HepG2 (cell line): ENCODE measurements at regions of chr2 and their contacts with region 1.

Region 1: GRCh38 chr2:37832590-37833197 is 92.4 kb upstream of the RMDN2 start:
- DNase-seq: peak; percentile 73
- ATAC-seq: peak; percentile 99
- H3K4me3 ChIP-seq: no peak overlapping the region
- H3K27ac ChIP-seq: no peak overlapping the region
- H3K4me1 ChIP-seq: peaks cover 7% of the 10 kb centered on the region
- H3K27me3 ChIP-seq: peaks cover 0 to 13% of the 10 kb centered on the region in 2 experiments; a peak in 2 of 5 replicates
- CTCF ChIP-seq: peak; percentile 93
- EP300 ChIP-seq: no peak
- POLR2A ChIP-seq: no peak
- RAD21 ChIP-seq: peak; percentile 78

Region 2: DNA sequence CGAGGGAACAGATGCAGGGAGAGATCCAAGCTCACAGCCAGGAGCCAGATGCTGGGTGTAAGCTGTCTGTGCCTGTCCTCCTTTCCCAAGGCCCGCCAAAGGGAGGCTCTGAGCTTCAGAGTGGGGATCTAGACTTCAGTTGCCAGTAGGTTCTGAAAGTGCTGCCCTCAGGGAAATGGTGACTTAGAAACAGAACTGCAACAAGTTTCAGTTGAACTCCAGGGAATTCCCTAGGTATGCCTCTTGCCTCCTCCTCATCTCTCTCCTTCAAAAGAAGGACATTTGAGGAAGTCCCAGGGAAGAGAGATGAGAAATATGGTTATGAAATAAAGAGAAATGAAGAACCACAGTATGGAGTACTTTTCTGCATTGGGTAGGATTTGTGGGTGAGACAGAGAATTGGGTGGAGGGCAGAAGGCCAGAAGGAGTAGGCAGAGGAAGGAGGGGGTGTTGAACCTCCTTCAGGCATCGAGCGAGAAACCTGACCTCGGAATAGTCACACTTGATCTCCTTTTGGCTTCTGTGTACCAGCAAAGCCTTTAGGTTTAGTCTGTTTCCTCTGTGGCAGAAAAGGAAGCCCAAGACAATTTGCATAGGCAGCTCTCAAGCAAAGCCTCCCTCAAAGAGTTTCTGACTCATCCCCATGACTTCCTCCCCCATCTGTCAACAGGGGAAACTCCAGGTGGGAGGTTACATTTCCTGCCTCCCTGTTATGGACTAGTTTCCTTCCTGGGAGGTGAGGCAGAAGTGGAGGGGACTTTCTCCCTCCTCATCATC is 442.5 kb before region 1 on chr2:
- CTCF ChIA-PET with region 1: interaction called, 35 read pairs
- POLR2A ChIA-PET with region 1: no interaction called
- in situ Hi-C with region 1: loop called (anchors 5 kb)
- intact Hi-C with region 1: no loop called
- DNase-seq: peak; percentile 56
- ATAC-seq: peak; percentile 80
- H3K4me3 ChIP-seq: no peak overlapping the region
- H3K27ac ChIP-seq: no peak overlapping the region
- H3K4me1 ChIP-seq: peaks cover 12% of the 10 kb centered on the region; the same call in 1 of the 2 replicates
- H3K27me3 ChIP-seq: peaks cover 0 to 2% of the 10 kb centered on the region in 2 experiments; a peak in 2 of 5 replicates
- CTCF ChIP-seq: no peak
- EP300 ChIP-seq: peak in 1 of 2 experiments; percentile 14; a peak in 1 of 4 replicates
- POLR2A ChIP-seq: no peak
- RAD21 ChIP-seq: no peak

Region 3: GRCh38 chr2:37414470-37414949 is 418.2 kb before region 1 on chr2:
- CTCF ChIA-PET with region 1: interaction called, 23 read pairs
- POLR2A ChIA-PET with region 1: no interaction called
- in situ Hi-C with region 1: no loop called
- intact Hi-C with region 1: loop called (anchors 1 kb)
- DNase-seq: peak; percentile 39
- ATAC-seq: peak; percentile 87
- H3K4me3 ChIP-seq: no peak overlapping the region
- H3K27ac ChIP-seq: no peak overlapping the region
- H3K4me1 ChIP-seq: no peaks in the 10 kb centered on the region
- H3K27me3 ChIP-seq: peaks cover 0 to 10% of the 10 kb centered on the region in 2 experiments; a peak in 3 of 5 replicates
- CTCF ChIP-seq: peak; percentile 72
- EP300 ChIP-seq: no peak
- POLR2A ChIP-seq: no peak
- RAD21 ChIP-seq: peak; percentile 72

Region 4: DNA sequence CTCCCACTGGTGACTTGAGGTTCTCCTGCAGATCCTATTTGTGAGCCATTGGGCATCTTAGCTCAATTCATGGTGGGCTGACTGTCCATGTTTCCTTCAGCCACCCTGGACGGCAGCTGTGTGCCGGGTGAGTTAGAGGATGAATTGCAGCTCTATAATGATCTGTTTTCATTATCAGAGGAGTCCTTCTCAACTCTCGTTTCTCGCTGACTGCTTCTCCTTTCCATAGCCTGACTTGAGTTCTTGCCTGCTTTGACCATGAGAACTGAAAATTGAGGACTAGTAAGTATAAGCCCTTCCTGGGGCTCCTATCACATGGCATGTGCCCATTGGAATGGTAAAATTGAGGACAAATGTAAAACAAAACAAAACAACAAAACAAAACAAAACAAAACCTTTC is 283.1 kb before region 1 on chr2:
- CTCF ChIA-PET with region 1: no interaction called
- POLR2A ChIA-PET with region 1: no interaction called
- in situ Hi-C with region 1: no loop called
- intact Hi-C with region 1: loop called (anchors 1 kb)
- DNase-seq: no peak
- ATAC-seq: no peak
- H3K4me3 ChIP-seq: no peak overlapping the region
- H3K27ac ChIP-seq: no peak overlapping the region
- H3K4me1 ChIP-seq: no peaks in the 10 kb centered on the region
- H3K27me3 ChIP-seq: peaks cover 0 to 9% of the 10 kb centered on the region in 2 experiments; a peak in 2 of 5 replicates
- CTCF ChIP-seq: no peak
- EP300 ChIP-seq: no peak
- POLR2A ChIP-seq: no peak
- RAD21 ChIP-seq: no peak

Region 5: DNA sequence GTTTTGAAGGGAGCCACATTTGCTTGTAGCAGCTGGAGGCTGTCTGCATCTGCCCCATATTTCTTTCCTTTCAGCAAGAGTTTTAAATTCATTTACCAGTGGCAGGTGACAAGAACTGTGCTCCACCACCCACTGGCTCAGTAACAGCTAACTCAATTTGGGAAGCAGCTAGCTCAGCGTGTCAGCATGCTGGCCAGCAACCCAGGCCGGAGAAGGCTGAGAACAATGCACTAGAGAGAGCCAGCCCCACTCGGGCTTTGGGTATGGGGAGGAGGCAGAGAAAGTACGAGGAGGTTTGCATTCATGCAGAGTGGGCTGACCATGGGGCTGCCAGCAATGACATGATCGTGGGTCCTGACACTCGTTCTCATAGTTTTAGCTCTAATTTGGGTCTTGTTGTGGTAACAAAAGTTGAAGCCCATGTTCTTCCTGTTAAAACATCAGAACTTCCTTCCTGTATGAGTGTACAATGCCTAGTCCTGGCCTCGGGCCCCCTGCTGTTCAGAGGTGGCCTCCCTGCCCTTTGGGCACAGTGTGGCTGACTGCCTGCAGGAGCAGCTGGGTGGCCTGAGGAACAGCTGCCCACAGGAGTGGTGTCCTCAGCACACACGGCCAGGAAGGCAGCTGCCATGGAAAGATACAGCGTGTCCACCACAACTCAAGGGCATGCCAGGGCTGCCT is 184.2 kb before region 1 on chr2:
- CTCF ChIA-PET with region 1: no interaction called
- POLR2A ChIA-PET with region 1: interaction called, 4 read pairs
- in situ Hi-C with region 1: no loop called
- intact Hi-C with region 1: loop called (anchors 1 kb)
- DNase-seq: no peak
- ATAC-seq: peak; percentile 71
- H3K4me3 ChIP-seq: no peak overlapping the region
- H3K27ac ChIP-seq: no peak overlapping the region
- H3K4me1 ChIP-seq: no peaks in the 10 kb centered on the region
- H3K27me3 ChIP-seq: peaks cover 2 to 29% of the 10 kb centered on the region in 2 experiments; a peak in 3 of 5 replicates
- CTCF ChIP-seq: 0 out of 2 replicates have a peak, but pooled peaks have one; percentile 8
- EP300 ChIP-seq: no peak
- POLR2A ChIP-seq: no peak
- RAD21 ChIP-seq: no peak

Region 6: DNA sequence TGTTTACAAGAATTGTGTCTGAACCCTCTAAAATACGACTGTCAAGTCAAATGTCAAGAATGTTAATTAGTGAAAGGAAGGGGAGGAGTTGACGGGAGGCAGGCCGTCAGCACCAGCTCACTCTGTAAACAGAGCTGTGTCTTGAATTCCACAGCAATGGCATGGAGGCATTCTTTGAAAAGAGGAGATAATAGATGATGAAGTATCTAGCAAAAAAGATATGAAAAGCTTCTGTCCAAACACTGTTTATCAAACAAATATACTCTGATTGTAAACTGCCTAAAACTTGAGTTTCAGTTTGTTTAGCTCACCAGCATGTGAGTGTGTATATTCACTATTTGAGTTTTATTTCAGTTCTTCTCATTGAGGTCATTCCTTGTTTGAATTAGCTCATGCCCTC is 66.6 kb before region 1 on chr2:
- CTCF ChIA-PET with region 1: no interaction called
- POLR2A ChIA-PET with region 1: no interaction called
- in situ Hi-C with region 1: no loop called
- intact Hi-C with region 1: no loop called
- DNase-seq: no peak
- ATAC-seq: no peak
- H3K4me3 ChIP-seq: no peak overlapping the region
- H3K27ac ChIP-seq: no peak overlapping the region
- H3K4me1 ChIP-seq: no peaks in the 10 kb centered on the region
- H3K27me3 ChIP-seq: no peaks in the 10 kb centered on the region; a peak in 1 of 5 replicates
- CTCF ChIP-seq: no peak
- EP300 ChIP-seq: no peak
- POLR2A ChIP-seq: no peak
- RAD21 ChIP-seq: no peak